ENCODE measurements at regions of chrX and their contacts with region 1.

Region 1: DNA sequence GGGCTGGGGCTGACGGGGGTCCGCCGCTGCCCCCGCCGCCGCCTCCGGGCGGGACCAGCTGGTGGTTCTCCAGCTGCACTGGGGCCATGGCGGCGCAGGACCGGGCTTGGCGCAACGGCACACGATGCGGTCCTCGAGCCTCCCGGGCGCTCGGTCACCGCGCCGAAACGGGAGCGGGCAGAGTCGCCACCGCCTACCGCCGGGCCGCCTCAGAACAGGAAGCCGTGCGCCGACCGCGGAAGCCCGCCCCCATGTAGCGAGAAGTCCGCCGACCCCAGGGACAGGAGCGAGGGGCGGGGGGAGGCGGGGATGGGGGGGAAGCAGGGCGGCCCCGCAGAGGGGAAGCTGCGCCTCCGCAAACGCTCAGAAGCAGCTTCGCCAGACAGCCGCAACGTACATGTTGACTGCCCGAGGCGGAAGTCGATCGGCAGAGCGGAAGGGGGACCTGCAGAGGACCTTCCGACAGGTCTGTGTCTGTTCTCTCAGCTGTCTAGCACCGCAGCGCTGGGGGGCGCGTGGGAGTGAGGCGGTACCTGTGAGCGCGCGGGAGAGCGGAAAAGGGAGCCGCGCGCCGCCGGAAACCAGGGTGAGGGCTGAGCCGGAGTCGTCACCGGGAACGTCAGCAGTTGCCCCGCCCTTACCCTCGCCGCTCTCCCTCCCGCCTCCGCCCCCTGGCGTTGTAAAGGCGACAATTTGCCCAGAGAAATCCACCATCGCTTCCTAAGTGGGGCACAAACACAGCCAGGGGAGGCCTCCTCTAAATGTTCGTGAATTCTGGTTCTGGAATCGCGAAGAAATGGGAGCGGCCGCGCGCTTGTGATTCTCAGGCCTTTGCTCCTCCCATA is at the start of gene MED14:
- DNase-seq: peak; percentile 83
- ATAC-seq: peak; percentile 94
- H3K4me3 ChIP-seq: peak within 1 kb of the TSS; percentile 88
- H3K27ac ChIP-seq: peak within 1 kb of the TSS; percentile 98
- H3K4me1 ChIP-seq: peaks cover 4% of the 10 kb centered on the region; the same call in 1 of the 2 replicates
- H3K27me3 ChIP-seq: peaks cover 6% of the 10 kb centered on the region
- CTCF ChIP-seq: peak; percentile 48
- POLR2A ChIP-seq: peak; percentile 88
- RAD21 ChIP-seq: no peak; the same call in 1 of the 2 replicates
- total RNA-seq, gene MED14: 16.4 and 17.6 TPM in 2 replicates

Region 2: GRCh38 chrX:40663880-40664633 is 71.5 kb before region 1 on chrX:
- CTCF ChIA-PET with region 1: interaction called, 3 read pairs
- POLR2A ChIA-PET with region 1: no interaction called
- dilution Hi-C with region 1: no loop called
- in situ Hi-C with region 1: no loop called
- intact Hi-C with region 1: loop called (anchors 2 kb)
- DNase-seq: peak; percentile 33
- ATAC-seq: peak; percentile 86
- H3K4me3 ChIP-seq: no peak overlapping the region
- H3K27ac ChIP-seq: no peak overlapping the region
- H3K4me1 ChIP-seq: no peaks in the 10 kb centered on the region
- H3K27me3 ChIP-seq: no peaks in the 10 kb centered on the region; the same call in 1 of the 2 replicates
- CTCF ChIP-seq: peak; percentile 48
- POLR2A ChIP-seq: no peak
- RAD21 ChIP-seq: peak; percentile 45

Region 3: GRCh38 chrX:40671126-40671525 is 64.4 kb before region 1 on chrX:
- CTCF ChIA-PET with region 1: no interaction called
- POLR2A ChIA-PET with region 1: no interaction called
- dilution Hi-C with region 1: no loop called
- in situ Hi-C with region 1: loop called (anchors 10 kb)
- intact Hi-C with region 1: no loop called
- DNase-seq: no peak
- ATAC-seq: no peak
- H3K4me3 ChIP-seq: no peak overlapping the region
- H3K27ac ChIP-seq: no peak overlapping the region
- H3K4me1 ChIP-seq: no peaks in the 10 kb centered on the region
- H3K27me3 ChIP-seq: no peaks in the 10 kb centered on the region; the same call in 1 of the 2 replicates
- CTCF ChIP-seq: no peak
- POLR2A ChIP-seq: no peak
- RAD21 ChIP-seq: no peak

Region 4: DNA sequence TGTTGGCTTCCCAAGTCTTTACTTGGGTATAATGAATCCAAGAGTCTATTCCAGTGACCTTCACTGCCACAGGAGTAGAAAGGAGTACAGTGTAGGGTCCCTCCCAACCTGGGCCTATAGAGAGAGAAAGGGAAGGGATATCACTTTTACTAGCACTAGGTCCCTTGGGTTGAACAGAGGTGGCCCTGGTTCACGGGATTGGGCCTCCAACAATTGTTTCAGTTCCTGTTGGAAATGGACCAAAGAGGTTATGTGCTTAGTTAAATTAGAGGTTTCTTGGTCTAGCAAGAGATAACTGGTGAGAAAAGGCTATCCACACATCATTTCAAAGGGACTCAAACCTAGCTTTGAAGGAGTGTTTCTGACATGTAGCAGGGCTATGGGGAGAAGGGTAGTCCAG is 56.9 kb after region 1 on chrX:
- CTCF ChIA-PET with region 1: interaction called, 3 read pairs
- POLR2A ChIA-PET with region 1: no interaction called
- dilution Hi-C with region 1: no loop called
- in situ Hi-C with region 1: no loop called
- intact Hi-C with region 1: loop called (anchors 1 kb)
- DNase-seq: no peak
- ATAC-seq: no peak
- H3K4me3 ChIP-seq: no peak overlapping the region
- H3K27ac ChIP-seq: no peak overlapping the region
- H3K4me1 ChIP-seq: peaks cover 5% of the 10 kb centered on the region
- H3K27me3 ChIP-seq: no peaks in the 10 kb centered on the region; the same call in 1 of the 2 replicates
- CTCF ChIP-seq: no peak
- POLR2A ChIP-seq: no peak
- RAD21 ChIP-seq: no peak

Region 5: GRCh38 chrX:40908001-40908400 is 172.5 kb after region 1 on chrX:
- CTCF ChIA-PET with region 1: no interaction called
- POLR2A ChIA-PET with region 1: no interaction called
- dilution Hi-C with region 1: no loop called
- in situ Hi-C with region 1: no loop called
- intact Hi-C with region 1: no loop called
- DNase-seq: peak; percentile 49
- ATAC-seq: no peak
- H3K4me3 ChIP-seq: no peak overlapping the region
- H3K27ac ChIP-seq: no peak overlapping the region
- H3K4me1 ChIP-seq: peaks cover 3% of the 10 kb centered on the region; the same call in 1 of the 2 replicates
- H3K27me3 ChIP-seq: peaks cover 5% of the 10 kb centered on the region
- CTCF ChIP-seq: no peak
- POLR2A ChIP-seq: no peak
- RAD21 ChIP-seq: no peak

Region 6: DNA sequence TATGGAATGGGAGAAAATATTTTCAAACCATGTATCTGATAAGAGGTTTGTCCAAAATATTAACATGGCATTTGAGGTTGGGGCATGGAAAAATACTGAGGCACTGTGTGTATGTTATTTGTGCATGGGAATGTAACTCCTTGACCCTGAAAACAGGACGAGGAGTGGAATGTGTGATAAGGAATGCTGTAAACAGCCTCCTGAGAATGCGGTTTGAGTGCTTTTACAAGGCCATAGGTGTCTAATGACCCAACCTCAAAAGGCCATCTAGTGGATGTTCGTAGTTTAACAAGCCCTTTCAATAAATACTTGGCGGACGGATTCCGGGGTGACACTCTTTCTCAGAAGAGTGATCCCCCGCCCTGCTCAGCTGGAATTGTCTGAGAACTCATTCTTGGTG is 186.8 kb after region 1 on chrX:
- CTCF ChIA-PET with region 1: no interaction called
- POLR2A ChIA-PET with region 1: no interaction called
- dilution Hi-C with region 1: no loop called
- in situ Hi-C with region 1: no loop called
- intact Hi-C with region 1: loop called (anchors 10 kb)
- DNase-seq: peak; percentile 44
- ATAC-seq: peak; percentile 32
- H3K4me3 ChIP-seq: no peak overlapping the region
- H3K27ac ChIP-seq: no peak overlapping the region
- H3K4me1 ChIP-seq: no peaks in the 10 kb centered on the region
- H3K27me3 ChIP-seq: no peaks in the 10 kb centered on the region; the same call in 1 of the 2 replicates
- CTCF ChIP-seq: peak; percentile 39
- POLR2A ChIP-seq: no peak
- RAD21 ChIP-seq: peak; percentile 40

Region 7: GRCh38 chrX:41084044-41084892 is 348.7 kb after region 1 on chrX:
- CTCF ChIA-PET with region 1: no interaction called
- POLR2A ChIA-PET with region 1: interaction called, 9 read pairs
- dilution Hi-C with region 1: no loop called
- in situ Hi-C with region 1: no loop called
- intact Hi-C with region 1: loop called (anchors 5 kb)
- DNase-seq: peak; percentile 96
- ATAC-seq: peak; percentile 70
- H3K4me3 ChIP-seq: peak overlapping the region; percentile 75
- H3K27ac ChIP-seq: peak overlapping the region; percentile 98
- H3K4me1 ChIP-seq: no peaks in the 10 kb centered on the region
- H3K27me3 ChIP-seq: peaks cover 3% of the 10 kb centered on the region
- CTCF ChIP-seq: no peak
- POLR2A ChIP-seq: peak; percentile 93
- RAD21 ChIP-seq: no peak

Measured in IMR-90 (cell line).